Sigmoid colon (tissue), 7 donors: ENCODE measurements at regions of chr6 and their contacts with region 1.

Region 1: DNA sequence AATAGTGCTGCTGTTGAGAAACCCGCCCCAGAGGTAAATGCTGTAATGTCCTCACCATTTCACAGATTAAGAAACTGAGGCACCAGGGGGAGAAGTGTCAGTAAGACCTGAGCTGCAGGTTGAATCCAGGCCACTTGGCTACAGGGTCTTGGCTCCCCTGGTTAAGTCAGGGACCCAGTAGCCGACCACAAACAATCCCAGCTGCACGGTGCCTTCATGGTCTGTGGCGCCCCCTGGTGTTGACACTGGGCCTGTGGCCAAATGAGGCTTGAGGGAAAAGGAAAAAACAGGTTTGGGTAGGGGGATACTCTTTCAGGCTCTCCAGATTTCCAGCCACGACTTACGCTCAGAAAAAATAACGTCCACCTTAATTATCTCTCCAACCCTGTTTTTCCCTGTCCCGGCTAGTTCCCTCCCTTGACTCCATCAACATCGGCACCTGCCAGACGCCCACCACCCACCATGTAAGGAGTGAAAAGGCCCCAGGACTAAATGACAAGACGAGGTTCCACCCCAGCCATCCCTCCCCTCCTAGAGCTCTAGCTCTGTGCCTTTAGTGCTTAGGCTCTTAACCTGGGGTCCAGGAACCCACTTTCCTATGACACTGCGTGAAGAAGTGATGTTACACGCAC is 47.7 kb upstream of the POLR1H start:
- DNase-seq: no peak
- H3K4me3 ChIP-seq: no peak overlapping the region
- H3K27ac ChIP-seq: no peak overlapping the region
- H3K4me1 ChIP-seq: no peaks in the 10 kb centered on the region
- H3K27me3 ChIP-seq: peaks cover 4 to 13% (median 5%) of the 10 kb centered on the region in 3 donors
- CTCF ChIP-seq: peak in 3 of 4 experiments; percentile 29 to 91 (median 59)
- EP300 ChIP-seq: no peak
- POLR2A ChIP-seq: no peak

Region 2: GRCh38 chr6:29847871-29848630 is 165.4 kb before region 1 on chr6:
- intact Hi-C with region 1: loop called (anchors 2 kb)
- DNase-seq: peak; percentile 87
- H3K4me3 ChIP-seq: no peak overlapping the region
- H3K27ac ChIP-seq: no peak overlapping the region
- H3K4me1 ChIP-seq: peaks cover 0 to 4% (median 2%) of the 10 kb centered on the region in 4 donors
- H3K27me3 ChIP-seq: peaks cover 0 to 42% (median 12%) of the 10 kb centered on the region in 3 donors
- CTCF ChIP-seq: peak; percentile 79 to 94 (median 93)
- EP300 ChIP-seq: no peak
- POLR2A ChIP-seq: no peak

Region 3: DNA sequence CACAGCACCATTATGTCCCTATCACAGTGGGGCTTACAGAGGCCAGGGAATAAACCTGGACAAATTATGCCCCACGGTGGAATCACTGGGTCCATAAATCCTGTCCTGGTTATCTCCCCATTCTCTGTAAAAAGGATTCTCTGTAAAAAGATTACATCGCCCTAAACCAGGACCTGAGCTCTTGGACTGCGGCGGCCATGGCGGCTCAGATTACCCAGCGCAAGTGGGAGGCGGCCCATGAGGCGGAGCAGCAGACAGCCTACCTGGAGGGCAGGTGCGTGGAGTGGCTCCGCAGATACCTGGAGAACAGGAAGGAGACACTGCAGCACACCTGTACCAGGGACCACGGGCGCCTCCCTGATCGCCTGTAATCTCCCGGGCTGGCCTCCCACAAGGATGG is 79.5 kb before region 1 on chr6:
- intact Hi-C with region 1: no loop called
- DNase-seq: no peak
- H3K4me3 ChIP-seq: no peak overlapping the region
- H3K27ac ChIP-seq: no peak overlapping the region
- H3K4me1 ChIP-seq: no peaks in the 10 kb centered on the region
- H3K27me3 ChIP-seq: no peaks in the 10 kb centered on the region
- CTCF ChIP-seq: no peak
- EP300 ChIP-seq: no peak
- POLR2A ChIP-seq: no peak